ENCODE measurements at regions of chr12 and their contacts with region 1.

Region 1: DNA sequence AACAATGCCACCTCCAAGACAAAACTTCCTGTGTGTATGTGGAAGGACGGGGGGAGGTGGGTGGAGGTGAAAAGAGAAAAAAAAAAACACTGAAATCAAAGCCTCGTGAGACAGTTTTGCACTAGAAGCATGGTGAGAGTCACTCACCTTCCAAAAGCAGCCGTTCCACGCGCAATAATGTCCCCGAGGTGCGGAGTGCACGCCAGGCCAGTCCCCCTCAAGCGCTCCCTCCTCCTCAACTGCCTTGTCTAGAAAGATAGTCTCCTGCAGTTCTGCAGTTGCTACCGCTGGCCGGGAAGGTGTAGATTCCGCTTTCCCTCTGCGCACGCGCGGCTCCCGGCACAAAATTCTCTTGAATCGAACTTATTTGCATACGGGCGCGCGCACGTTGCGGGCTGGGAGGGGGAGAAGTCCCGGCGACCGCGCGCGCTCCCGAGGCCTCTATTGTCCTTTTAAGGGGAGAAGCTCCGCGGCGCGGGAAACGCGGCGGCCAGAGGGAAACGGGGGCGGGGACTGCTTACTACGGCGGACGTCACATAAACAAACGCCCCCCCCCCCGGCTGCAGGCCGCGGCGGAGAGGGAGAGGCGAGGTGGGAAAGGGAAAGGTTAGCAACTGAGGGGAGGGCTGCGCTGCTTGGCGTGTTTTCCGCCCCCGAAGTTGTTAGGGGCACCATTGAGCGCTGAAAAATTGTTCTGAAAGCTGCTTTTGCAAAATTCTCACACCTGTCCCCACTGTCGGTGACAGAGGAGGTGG is at the start of gene SINHCAF:
- DNase-seq: peak; percentile 97 to 99 (median 98)
- H3K4me3 ChIP-seq: peak within 1 kb of the TSS; percentile 88 to 89
- H3K4me3 Mint-ChIP-seq: peak within 1 kb of the TSS; percentile 88 to 99 (median 97)
- H3K27ac ChIP-seq: peak within 1 kb of the TSS; percentile 87
- H3K27ac Mint-ChIP-seq: peak within 1 kb of the TSS; percentile 93 to 99 (median 98)
- H3K4me1 ChIP-seq: peaks cover 25% of the 10 kb centered on the region
- H3K4me1 Mint-ChIP-seq: peaks cover 21 to 44% (median 27%) of the 10 kb centered on the region in 4 donors
- H3K27me3 ChIP-seq: no peaks in the 10 kb centered on the region
- H3K27me3 Mint-ChIP-seq: peaks cover 0 to 2% of the 10 kb centered on the region in 2 donors
- total RNA-seq, gene SINHCAF: 95.8 to 98.5 TPM

Region 2: GRCh38 chr12:29380536-29381523 is 1945.2 kb before region 1 on chr12 and contains the start of gene ERGIC2:
- CTCF ChIA-PET with region 1: no interaction called
- POLR2A ChIA-PET with region 1: interaction called, 3 read pairs
- intact Hi-C with region 1: loop called (anchors 5 kb)
- DNase-seq: peak; percentile 93 to 96 (median 96)
- H3K4me3 ChIP-seq: peak within 1 kb of the TSS; percentile 92 to 100
- H3K4me3 Mint-ChIP-seq: peak within 1 kb of the TSS; percentile 89 to 98 (median 94)
- H3K27ac ChIP-seq: peak within 1 kb of the TSS; percentile 95
- H3K27ac Mint-ChIP-seq: peak within 1 kb of the TSS; percentile 94 to 99 (median 98)
- H3K4me1 ChIP-seq: peaks cover 27% of the 10 kb centered on the region
- H3K4me1 Mint-ChIP-seq: peaks cover 24 to 57% (median 46%) of the 10 kb centered on the region in 4 donors
- H3K27me3 ChIP-seq: no peaks in the 10 kb centered on the region
- H3K27me3 Mint-ChIP-seq: no peaks in the 10 kb centered on the region
- total RNA-seq, gene ERGIC2: 74.9 to 82.9 TPM

Region 3: GRCh38 chr12:31117203-31118011 is 208.6 kb before region 1 on chr12:
- CTCF ChIA-PET with region 1: no interaction called
- POLR2A ChIA-PET with region 1: no interaction called
- intact Hi-C with region 1: loop called (anchors 5 kb)
- DNase-seq: peak; percentile 39 to 54 (median 45)
- H3K4me3 ChIP-seq: peak overlapping the region; percentile 22 to 62
- H3K4me3 Mint-ChIP-seq: peak overlapping the region; percentile 70 to 91 (median 81)
- H3K27ac ChIP-seq: peak overlapping the region; percentile 4
- H3K27ac Mint-ChIP-seq: peak overlapping the region in 3 of 7 donors; percentile 24 to 72 (median 36)
- H3K4me1 ChIP-seq: peaks cover 24% of the 10 kb centered on the region
- H3K4me1 Mint-ChIP-seq: peaks cover 0 to 35% (median 2%) of the 10 kb centered on the region in 4 donors
- H3K27me3 ChIP-seq: no peaks in the 10 kb centered on the region
- H3K27me3 Mint-ChIP-seq: peaks cover 2 to 33% of the 10 kb centered on the region in 2 donors

Region 4: DNA sequence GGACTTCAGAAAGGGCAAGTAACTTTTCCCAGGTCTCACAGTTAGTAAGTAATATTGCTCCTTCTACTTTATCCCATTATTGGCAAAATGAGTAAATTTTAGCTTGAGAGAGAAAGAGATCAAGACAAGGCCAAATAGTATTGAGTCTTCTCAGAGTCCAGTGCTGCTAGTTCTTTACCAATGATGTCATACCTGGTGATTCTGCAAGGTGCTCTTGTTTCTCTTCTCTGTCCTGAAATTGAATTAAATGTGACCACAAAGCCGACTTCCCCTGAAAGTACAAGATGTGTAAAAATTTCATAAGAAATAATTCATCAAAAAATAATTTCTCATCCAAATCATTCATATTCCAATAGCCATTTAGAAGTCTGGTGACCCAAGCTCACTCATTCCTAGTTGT is 97.4 kb after region 1 on chr12:
- CTCF ChIA-PET with region 1: no interaction called
- POLR2A ChIA-PET with region 1: no interaction called
- intact Hi-C with region 1: no loop called
- DNase-seq: no peak
- H3K4me3 ChIP-seq: no peak overlapping the region
- H3K4me3 Mint-ChIP-seq: no peak overlapping the region
- H3K27ac ChIP-seq: no peak overlapping the region
- H3K27ac Mint-ChIP-seq: no peak overlapping the region
- H3K4me1 ChIP-seq: no peaks in the 10 kb centered on the region
- H3K4me1 Mint-ChIP-seq: no peaks in the 10 kb centered on the region
- H3K27me3 ChIP-seq: no peaks in the 10 kb centered on the region
- H3K27me3 Mint-ChIP-seq: peaks cover 7 to 10% of the 10 kb centered on the region in 2 donors

Region 5: GRCh38 chr12:31659087-31659933 is 333.3 kb after region 1 on chr12 and contains the start of gene ETFBKMT:
- CTCF ChIA-PET with region 1: no interaction called
- POLR2A ChIA-PET with region 1: interaction called, 3 read pairs
- intact Hi-C with region 1: loop called (anchors 1 kb)
- DNase-seq: peak; percentile 91 to 97 (median 94)
- H3K4me3 ChIP-seq: peak within 1 kb of the TSS; percentile 86 to 89
- H3K4me3 Mint-ChIP-seq: peak within 1 kb of the TSS; percentile 92 to 99 (median 94)
- H3K27ac ChIP-seq: peak within 1 kb of the TSS; percentile 86
- H3K27ac Mint-ChIP-seq: peak within 1 kb of the TSS; percentile 91 to 99 (median 98)
- H3K4me1 ChIP-seq: peaks cover 17% of the 10 kb centered on the region
- H3K4me1 Mint-ChIP-seq: peaks cover 8 to 21% (median 14%) of the 10 kb centered on the region in 4 donors
- H3K27me3 ChIP-seq: no peaks in the 10 kb centered on the region
- H3K27me3 Mint-ChIP-seq: no peaks in the 10 kb centered on the region
- total RNA-seq, gene ETFBKMT: 1.5 to 1.8 TPM

Region 6: GRCh38 chr12:32679091-32679919 is 1353.3 kb after region 1 on chr12 and contains the start of gene DNM1L:
- CTCF ChIA-PET with region 1: no interaction called
- POLR2A ChIA-PET with region 1: interaction called, 3 read pairs
- intact Hi-C with region 1: loop called (anchors 1 kb)
- DNase-seq: peak; percentile 91 to 95 (median 93)
- H3K4me3 ChIP-seq: peak within 1 kb of the TSS; percentile 65 to 69
- H3K4me3 Mint-ChIP-seq: peak within 1 kb of the TSS; percentile 89 to 97 (median 94)
- H3K27ac ChIP-seq: peak within 1 kb of the TSS; percentile 87
- H3K27ac Mint-ChIP-seq: peak within 1 kb of the TSS; percentile 80 to 97 (median 94)
- H3K4me1 ChIP-seq: peaks cover 18% of the 10 kb centered on the region
- H3K4me1 Mint-ChIP-seq: peaks cover 14 to 37% (median 27%) of the 10 kb centered on the region in 4 donors
- H3K27me3 ChIP-seq: no peaks in the 10 kb centered on the region
- H3K27me3 Mint-ChIP-seq: no peaks in the 10 kb centered on the region
- total RNA-seq, gene DNM1L: 42.7 to 50.1 TPM